ENCODE measurements at regions of chr11 and their contacts with region 1.

Region 1: GRCh38 chr11:102451681-102452460 is 694 bp downstream of the TMEM123 start:
- DNase-seq: peak; percentile 83
- H3K4me3 ChIP-seq: peak overlapping the region; percentile 72 to 90 (median 87)
- H3K27ac ChIP-seq: peak overlapping the region; percentile 86 to 97 (median 90)
- H3K4me1 ChIP-seq: peaks cover 0 to 52% (median 39%) of the 10 kb centered on the region in 4 donors
- H3K27me3 ChIP-seq: no peaks in the 10 kb centered on the region
- CTCF ChIP-seq: no peak
- EP300 ChIP-seq: no peak
- POLR2A ChIP-seq: no peak

Region 2: GRCh38 chr11:102346748-102347461 is 105.0 kb before region 1 on chr11 and contains the start of gene BIRC2:
- intact Hi-C with region 1: loop called (anchors 2 kb)
- DNase-seq: peak; percentile 96
- H3K4me3 ChIP-seq: peak within 1 kb of the TSS; percentile 63 to 90 (median 83)
- H3K27ac ChIP-seq: peak within 1 kb of the TSS; percentile 92 to 99 (median 99)
- H3K4me1 ChIP-seq: peaks cover 0 to 38% (median 33%) of the 10 kb centered on the region in 4 donors
- H3K27me3 ChIP-seq: no peaks in the 10 kb centered on the region
- CTCF ChIP-seq: peak; percentile 61 to 86 (median 73)
- EP300 ChIP-seq: peak in 1 of 4 donors; percentile 10
- POLR2A ChIP-seq: peak; percentile 87 to 88
- total RNA-seq, gene BIRC2: 32.7 to 56.0 (median 53.2) TPM

Region 3: GRCh38 chr11:102390667-102391465 is 61.0 kb before region 1 on chr11:
- intact Hi-C with region 1: loop called (anchors 5 kb)
- DNase-seq: peak; percentile 80
- H3K4me3 ChIP-seq: no peak overlapping the region
- H3K27ac ChIP-seq: peak overlapping the region in 1 of 4 donors; percentile 14
- H3K4me1 ChIP-seq: peaks cover 0 to 7% (median 3%) of the 10 kb centered on the region in 4 donors
- H3K27me3 ChIP-seq: no peaks in the 10 kb centered on the region
- CTCF ChIP-seq: peak; percentile 73 to 90 (median 78)
- EP300 ChIP-seq: no peak
- POLR2A ChIP-seq: no peak

Region 4: DNA sequence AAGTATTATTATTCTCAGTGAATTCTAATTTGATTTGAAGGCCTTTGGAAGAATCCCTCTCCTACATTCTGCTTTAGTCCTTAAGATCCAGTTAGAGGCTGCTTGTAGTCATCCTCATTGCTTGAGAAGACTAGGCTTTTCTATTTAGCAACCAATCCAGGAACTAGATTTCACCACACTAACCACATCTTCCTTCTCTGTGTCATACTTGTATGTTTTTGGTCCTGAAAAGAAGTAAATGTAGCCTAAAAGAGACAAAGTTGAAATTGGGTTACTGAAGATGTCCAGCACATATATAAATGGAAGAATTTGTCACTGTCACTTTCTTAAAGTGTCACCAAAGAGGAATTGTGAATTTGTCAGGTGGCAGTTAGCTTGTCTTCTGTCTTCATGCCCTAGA is 125.3 kb after region 1 on chr11:
- intact Hi-C with region 1: no loop called
- DNase-seq: no peak
- H3K4me3 ChIP-seq: no peak overlapping the region
- H3K27ac ChIP-seq: no peak overlapping the region
- H3K4me1 ChIP-seq: no peaks in the 10 kb centered on the region
- H3K27me3 ChIP-seq: no peaks in the 10 kb centered on the region
- CTCF ChIP-seq: no peak
- EP300 ChIP-seq: no peak
- POLR2A ChIP-seq: no peak

Region 5: GRCh38 chr11:102920118-102920684 is 468.3 kb after region 1 on chr11:
- intact Hi-C with region 1: no loop called
- DNase-seq: no peak
- H3K4me3 ChIP-seq: no peak overlapping the region
- H3K27ac ChIP-seq: no peak overlapping the region
- H3K4me1 ChIP-seq: peaks cover 0 to 5% (median 0%) of the 10 kb centered on the region in 4 donors
- H3K27me3 ChIP-seq: no peaks in the 10 kb centered on the region
- CTCF ChIP-seq: no peak
- EP300 ChIP-seq: no peak
- POLR2A ChIP-seq: no peak

Measured in sigmoid colon (tissue), 7 donors.